Thyroid gland (tissue), 4 donors: ENCODE measurements at regions of chr19 and their contacts with region 1.

Region 1: DNA sequence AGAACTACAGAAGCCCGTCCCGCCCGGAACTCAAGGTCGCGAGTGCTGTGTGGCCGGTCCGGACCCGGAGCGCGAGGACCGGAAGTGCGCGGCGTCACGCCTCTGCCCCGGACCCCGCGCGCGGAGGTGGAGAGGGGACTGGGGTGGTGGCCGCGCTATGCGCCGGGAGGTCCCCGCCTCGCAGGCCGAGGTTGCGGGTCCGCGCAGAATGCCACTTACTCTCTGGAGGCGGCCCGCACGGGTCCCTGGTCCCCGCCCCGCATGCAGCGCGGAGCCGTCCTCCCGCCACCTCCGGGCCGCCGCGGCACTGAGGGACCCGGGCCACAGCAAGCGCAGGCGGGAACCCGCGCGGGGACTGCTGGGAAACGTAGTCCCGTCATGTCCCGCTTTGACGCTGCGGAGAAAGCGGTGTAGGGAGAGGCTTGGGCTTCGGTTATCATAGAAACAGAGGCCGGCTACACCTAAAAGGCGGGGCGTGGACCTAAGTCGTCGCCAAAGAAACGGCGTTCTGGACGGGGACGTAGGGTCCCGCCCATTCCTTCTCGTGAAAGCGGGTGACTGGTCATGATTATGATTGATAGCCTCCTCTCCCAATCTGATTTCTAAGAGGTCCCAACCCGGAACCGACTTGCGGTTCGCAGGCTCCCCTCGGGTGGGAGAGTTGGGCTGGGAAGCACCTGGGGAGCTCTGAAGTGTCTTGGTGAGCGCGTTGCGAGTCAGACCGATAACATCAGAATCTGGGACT is at the start of gene ZNF837:
- DNase-seq: peak; percentile 99
- H3K4me3 ChIP-seq: peak within 1 kb of the TSS; percentile 47 to 74 (median 70)
- H3K27ac ChIP-seq: peak within 1 kb of the TSS; percentile 88 to 96 (median 92)
- H3K4me1 ChIP-seq: peaks cover 20 to 30% of the 10 kb centered on the region in 2 donors
- H3K27me3 ChIP-seq: no peaks in the 10 kb centered on the region
- CTCF ChIP-seq: peak in 2 of 6 experiments; percentile 36 to 41
- POLR2A ChIP-seq: peak; percentile 80 to 90
- total RNA-seq, gene ZNF837: 6.3 to 16.4 (median 15.1) TPM

Region 2: DNA sequence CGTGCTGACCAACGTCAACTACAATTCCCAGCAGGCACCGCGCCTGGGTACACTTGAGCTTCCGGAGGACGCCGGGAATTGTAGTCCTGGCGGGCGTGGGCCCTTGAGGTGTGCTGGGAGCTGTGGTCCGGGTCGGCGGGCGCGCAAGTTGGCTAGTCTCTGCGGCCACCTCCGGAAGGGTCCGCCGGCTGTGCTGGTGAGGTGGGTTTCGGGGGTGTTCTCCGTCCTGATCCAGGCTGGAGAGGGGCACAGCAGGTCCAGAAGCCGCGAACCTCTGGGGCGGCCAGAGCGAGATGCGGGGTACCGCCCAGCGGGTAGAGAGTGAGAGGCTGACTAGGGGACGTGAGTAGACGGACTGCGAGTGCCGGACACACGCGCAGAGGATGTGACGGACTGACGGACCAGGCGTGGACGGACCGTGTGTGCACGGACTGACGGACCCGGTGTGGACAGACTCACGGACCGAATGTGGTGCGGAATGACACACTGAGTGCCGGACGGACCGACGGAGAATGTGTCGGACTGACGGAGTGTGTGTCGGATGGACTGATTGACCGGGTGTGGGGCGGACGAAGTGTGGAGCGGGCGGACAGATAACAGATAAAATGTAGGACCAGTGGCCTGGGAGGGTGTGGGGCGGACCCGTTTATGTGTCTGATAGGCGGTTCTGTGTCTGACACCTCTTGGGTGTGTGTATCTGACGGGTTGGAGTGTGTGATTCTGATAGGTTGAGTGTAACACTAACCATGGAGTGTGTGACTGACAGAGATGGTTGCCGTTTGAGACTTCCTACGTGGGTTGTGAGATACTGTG is 53.8 kb before region 1 on chr19 and contains the start of gene ZSCAN22:
- intact Hi-C with region 1: loop called (anchors 10 kb)
- DNase-seq: peak; percentile 96 to 97
- H3K4me3 ChIP-seq: peak within 1 kb of the TSS; percentile 44 to 67 (median 50)
- H3K27ac ChIP-seq: peak within 1 kb of the TSS; percentile 65 to 92 (median 73)
- H3K4me1 ChIP-seq: peaks cover 17 to 22% of the 10 kb centered on the region in 2 donors
- H3K27me3 ChIP-seq: no peaks in the 10 kb centered on the region
- CTCF ChIP-seq: peak in 1 of 6 experiments; percentile 7
- POLR2A ChIP-seq: peak in 1 of 2 donors; percentile 60
- total RNA-seq, gene ZSCAN22: 3.0 to 4.5 (median 4.2) TPM

Region 3: GRCh38 chr19:58466760-58467589 is 86.1 kb after region 1 on chr19 and contains the start of gene ZNF324:
- intact Hi-C with region 1: no loop called
- DNase-seq: peak; percentile 100
- H3K4me3 ChIP-seq: peak within 1 kb of the TSS; percentile 81 to 96 (median 96)
- H3K27ac ChIP-seq: peak within 1 kb of the TSS in 2 of 3 donors; percentile 6 to 65
- H3K4me1 ChIP-seq: peaks cover 8 to 9% of the 10 kb centered on the region in 2 donors
- H3K27me3 ChIP-seq: no peaks in the 10 kb centered on the region
- CTCF ChIP-seq: peak in 1 of 6 experiments; percentile 6
- POLR2A ChIP-seq: peak in 1 of 2 donors; percentile 80
- total RNA-seq, gene ZNF324: 27.0 to 41.7 (median 32.2) TPM